A673 (cell line): ENCODE measurements at regions of chr12 and their contacts with region 1.

Region 1: GRCh38 chr12:18224745-18225144 is 36.6 kb upstream of the PIK3C2G start:
- DNase-seq: peak; percentile 63
- H3K4me3 ChIP-seq: no peak overlapping the region
- H3K27ac ChIP-seq: no peak overlapping the region
- H3K4me1 ChIP-seq: no peaks in the 10 kb centered on the region
- H3K27me3 ChIP-seq: no peaks in the 10 kb centered on the region
- CTCF ChIP-seq: peak; percentile 68

Region 2: DNA sequence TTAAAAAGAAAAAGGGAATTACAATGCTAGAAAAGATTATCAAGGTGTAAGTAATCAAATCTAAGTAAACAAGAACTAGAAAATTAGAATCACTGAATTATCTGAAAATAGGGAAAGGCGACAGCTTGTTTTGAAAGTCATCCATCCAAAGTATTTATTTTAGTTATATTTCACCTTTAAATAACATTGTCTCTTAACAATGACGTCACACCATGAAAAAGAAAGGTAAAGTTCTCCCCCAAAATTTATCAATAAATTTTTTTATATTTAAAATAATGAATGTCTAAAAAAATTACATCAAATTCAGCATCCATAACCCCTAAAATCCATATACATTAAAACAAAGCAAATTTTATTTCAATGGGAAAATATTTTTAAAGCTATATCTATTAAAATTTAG is 357.9 kb before region 1 on chr12:
- CTCF ChIA-PET with region 1: no interaction called
- POLR2A ChIA-PET with region 1: no interaction called
- intact Hi-C with region 1: no loop called
- DNase-seq: no peak
- H3K4me3 ChIP-seq: no peak overlapping the region
- H3K27ac ChIP-seq: no peak overlapping the region
- H3K4me1 ChIP-seq: no peaks in the 10 kb centered on the region
- H3K27me3 ChIP-seq: no peaks in the 10 kb centered on the region
- CTCF ChIP-seq: no peak

Region 3: GRCh38 chr12:18158774-18159557 is 65.8 kb before region 1 on chr12:
- CTCF ChIA-PET with region 1: no interaction called
- POLR2A ChIA-PET with region 1: no interaction called
- intact Hi-C with region 1: loop called (anchors 1 kb)
- DNase-seq: peak; percentile 63
- H3K4me3 ChIP-seq: no peak overlapping the region
- H3K27ac ChIP-seq: no peak overlapping the region
- H3K4me1 ChIP-seq: no peaks in the 10 kb centered on the region
- H3K27me3 ChIP-seq: no peaks in the 10 kb centered on the region
- CTCF ChIP-seq: peak; percentile 88

Region 4: DNA sequence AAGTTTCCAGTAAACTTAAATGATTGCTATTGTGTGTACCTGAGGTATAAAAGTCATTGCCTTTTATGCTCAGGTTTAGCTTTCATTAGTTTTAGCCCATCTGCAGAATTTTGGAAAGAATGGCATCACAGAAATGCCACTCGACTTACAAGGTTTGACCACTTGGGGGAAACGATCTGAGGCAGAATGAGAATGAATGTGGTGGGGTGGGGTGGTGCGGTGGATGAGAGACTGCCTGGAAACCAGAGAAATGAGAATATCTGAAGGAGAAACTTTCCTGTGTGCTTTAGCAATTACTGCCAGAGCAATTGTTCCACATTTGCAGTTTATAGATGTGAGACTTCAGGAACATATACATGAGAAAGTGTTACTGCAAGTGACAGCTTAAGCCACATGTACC is 1918.2 kb after region 1 on chr12:
- CTCF ChIA-PET with region 1: no interaction called
- POLR2A ChIA-PET with region 1: no interaction called
- intact Hi-C with region 1: no loop called
- DNase-seq: peak; percentile 26
- H3K4me3 ChIP-seq: no peak overlapping the region
- H3K27ac ChIP-seq: no peak overlapping the region
- H3K4me1 ChIP-seq: no peaks in the 10 kb centered on the region
- H3K27me3 ChIP-seq: no peaks in the 10 kb centered on the region
- CTCF ChIP-seq: no peak